ENCODE measurements at regions of chr22 and their contacts with region 1.

Region 1: DNA sequence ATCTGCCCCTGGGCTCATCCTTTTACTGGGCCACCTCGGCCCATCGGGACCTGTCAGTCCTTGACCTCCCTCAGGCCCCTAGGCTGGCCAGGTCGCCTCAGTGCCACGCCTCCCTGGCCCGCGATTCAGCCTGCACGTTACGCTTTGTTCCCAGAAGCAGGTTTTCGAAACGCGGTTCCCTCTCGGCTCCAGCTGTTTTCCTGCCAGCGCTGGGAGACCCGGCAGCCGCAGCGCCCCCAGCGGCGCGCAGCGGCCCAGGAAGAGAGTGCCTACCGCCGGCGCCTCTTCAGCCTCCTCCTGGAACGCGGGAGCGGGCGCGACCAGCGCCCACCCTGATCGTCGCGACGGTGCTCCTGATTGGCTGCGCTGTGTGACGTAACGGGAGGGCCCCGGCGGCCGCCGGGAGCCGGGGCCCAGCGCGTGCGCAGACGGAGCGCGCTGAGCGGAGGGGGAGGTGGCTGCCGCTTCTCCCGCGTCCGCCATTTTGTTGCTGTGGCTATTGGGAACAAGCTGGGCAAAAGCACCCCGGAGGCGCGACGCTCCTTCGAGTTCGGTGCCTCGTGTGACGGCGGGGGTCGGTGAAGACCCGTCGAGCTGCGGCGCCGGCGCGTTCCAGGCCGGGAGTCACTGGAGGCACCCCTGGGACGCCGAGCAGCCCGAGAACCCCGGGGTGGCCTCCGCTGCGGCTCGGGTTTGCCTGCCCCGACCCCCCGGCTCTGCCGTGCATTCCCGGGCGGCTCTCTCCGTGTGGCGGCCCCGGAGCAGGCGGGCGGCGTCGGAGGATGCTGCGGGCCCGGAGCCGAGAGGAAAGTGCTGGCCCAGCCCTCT is at the start of gene CRKL:
- DNase-seq: peak; percentile 98
- ATAC-seq: peak; percentile 98
- H3K4me3 Mint-ChIP-seq: peak within 1 kb of the TSS; percentile 99
- H3K27ac Mint-ChIP-seq: peak within 1 kb of the TSS; percentile 93
- H3K4me1 Mint-ChIP-seq: peaks cover 27% of the 10 kb centered on the region
- H3K27me3 Mint-ChIP-seq: no peaks in the 10 kb centered on the region
- total RNA-seq, gene CRKL: 80.8 to 92.0 TPM

Region 2: GRCh38 chr22:20792947-20793294 is 124.3 kb before region 1 on chr22:
- CTCF ChIA-PET with region 1: no interaction called
- POLR2A ChIA-PET with region 1: no interaction called
- intact Hi-C with region 1: no loop called
- DNase-seq: no peak
- ATAC-seq: no peak
- H3K4me3 Mint-ChIP-seq: no peak overlapping the region
- H3K27ac Mint-ChIP-seq: no peak overlapping the region
- H3K4me1 Mint-ChIP-seq: no peaks in the 10 kb centered on the region
- H3K27me3 Mint-ChIP-seq: no peaks in the 10 kb centered on the region

Region 3: GRCh38 chr22:20836987-20837823 is 80.0 kb before region 1 on chr22:
- CTCF ChIA-PET with region 1: no interaction called
- POLR2A ChIA-PET with region 1: no interaction called
- intact Hi-C with region 1: no loop called
- DNase-seq: no peak
- ATAC-seq: no peak
- H3K4me3 Mint-ChIP-seq: no peak overlapping the region
- H3K27ac Mint-ChIP-seq: no peak overlapping the region
- H3K4me1 Mint-ChIP-seq: peaks cover 27% of the 10 kb centered on the region
- H3K27me3 Mint-ChIP-seq: no peaks in the 10 kb centered on the region

Region 4: DNA sequence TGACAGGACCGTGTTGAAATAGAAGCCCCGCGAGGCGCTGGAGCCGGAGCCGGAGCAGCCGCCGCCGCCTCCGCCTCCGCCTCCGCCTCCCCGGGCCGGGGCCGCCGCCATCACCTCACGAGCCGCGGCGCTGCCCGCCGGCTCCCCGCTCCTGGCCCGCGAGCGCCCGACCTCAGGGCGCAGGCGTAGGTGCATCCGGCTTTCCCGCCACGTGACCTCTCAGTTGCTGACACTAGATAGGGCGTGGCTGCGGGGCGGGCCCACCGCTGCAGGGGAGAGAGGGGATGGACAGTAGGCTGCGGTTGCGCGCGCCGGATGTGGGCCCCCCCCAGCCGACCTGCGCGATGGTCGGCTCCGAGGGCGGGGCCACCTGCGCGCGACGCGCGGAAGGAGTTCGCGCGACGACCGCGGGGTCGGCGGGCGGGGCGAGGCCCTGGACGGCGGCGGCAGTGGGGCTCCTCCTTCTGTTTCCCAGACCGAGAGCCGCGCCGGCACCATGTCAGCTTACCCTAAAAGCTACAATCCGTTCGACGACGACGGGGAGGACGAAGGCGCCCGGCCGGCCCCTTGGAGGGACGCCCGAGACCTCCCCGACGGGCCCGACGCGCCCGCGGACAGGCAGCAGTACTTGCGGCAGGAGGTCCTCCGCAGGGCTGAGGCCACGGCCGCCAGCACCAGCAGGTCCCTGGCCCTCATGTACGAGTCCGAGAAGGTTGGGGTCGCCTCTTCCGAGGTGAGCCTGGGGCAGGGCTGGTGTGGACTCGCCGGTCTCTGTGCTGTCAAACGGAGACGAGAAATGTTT is 58.4 kb before region 1 on chr22 and contains the starts of genes PI4KA and SNAP29:
- CTCF ChIA-PET with region 1: interaction called, 3 read pairs
- POLR2A ChIA-PET with region 1: interaction called, 4 read pairs
- intact Hi-C with region 1: loop called (anchors 1 to 2 kb)
- DNase-seq: peak; percentile 99
- ATAC-seq: peak; percentile 95
- H3K4me3 Mint-ChIP-seq: peak within 1 kb of the TSS; percentile 87
- H3K27ac Mint-ChIP-seq: peak within 1 kb of the TSS; percentile 79
- H3K4me1 Mint-ChIP-seq: peaks cover 46% of the 10 kb centered on the region
- H3K27me3 Mint-ChIP-seq: no peaks in the 10 kb centered on the region
- total RNA-seq, gene PI4KA: 52.8 TPM
- total RNA-seq, gene SNAP29: 22.8 to 33.8 TPM

Region 5: DNA sequence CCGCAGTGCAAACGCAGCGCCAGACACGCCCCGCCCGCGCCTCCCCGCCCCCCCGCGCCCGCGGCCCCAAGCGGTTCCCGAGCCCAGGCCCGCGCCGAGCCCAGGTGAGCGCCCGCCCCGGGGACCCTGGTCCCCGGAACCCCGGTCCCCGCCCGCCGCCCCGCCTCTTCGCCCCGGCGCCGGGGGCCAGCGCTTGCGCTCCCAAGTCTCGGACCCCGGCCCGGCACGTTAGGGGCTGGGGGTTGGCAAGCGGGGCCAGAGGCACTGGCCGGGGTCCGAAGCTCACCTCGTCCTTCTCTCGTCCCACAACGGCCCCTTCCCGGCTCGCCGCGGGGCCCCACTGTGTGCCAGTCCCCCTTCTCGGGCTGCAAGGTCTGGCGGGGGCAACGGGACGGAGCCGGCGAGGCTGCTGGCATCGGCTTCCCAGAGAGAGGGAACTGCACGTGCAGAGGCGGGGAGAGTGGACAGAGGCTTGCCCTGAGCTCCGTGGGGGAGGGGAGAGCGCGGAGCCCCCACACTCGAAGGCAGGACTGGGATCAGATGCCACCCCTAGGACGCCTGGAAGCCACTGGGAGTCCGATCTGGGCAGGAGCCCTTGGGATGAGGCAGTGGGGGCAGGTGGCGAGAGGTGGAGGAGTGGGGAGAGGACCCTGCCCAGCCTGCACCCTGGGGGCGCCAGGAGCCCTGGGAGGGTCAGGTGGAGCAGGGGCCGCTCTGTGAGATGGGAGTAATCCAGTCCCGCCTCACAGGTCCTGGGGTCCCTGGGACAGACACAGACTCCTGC is 48.1 kb after region 1 on chr22:
- CTCF ChIA-PET with region 1: interaction called, 3 read pairs
- POLR2A ChIA-PET with region 1: no interaction called
- intact Hi-C with region 1: loop called in 1 of 2 experiments (anchors 5 kb)
- DNase-seq: no peak
- ATAC-seq: no peak
- H3K4me3 Mint-ChIP-seq: no peak overlapping the region
- H3K27ac Mint-ChIP-seq: no peak overlapping the region
- H3K4me1 Mint-ChIP-seq: peaks cover 11% of the 10 kb centered on the region
- H3K27me3 Mint-ChIP-seq: peaks cover 7% of the 10 kb centered on the region

Region 6: DNA sequence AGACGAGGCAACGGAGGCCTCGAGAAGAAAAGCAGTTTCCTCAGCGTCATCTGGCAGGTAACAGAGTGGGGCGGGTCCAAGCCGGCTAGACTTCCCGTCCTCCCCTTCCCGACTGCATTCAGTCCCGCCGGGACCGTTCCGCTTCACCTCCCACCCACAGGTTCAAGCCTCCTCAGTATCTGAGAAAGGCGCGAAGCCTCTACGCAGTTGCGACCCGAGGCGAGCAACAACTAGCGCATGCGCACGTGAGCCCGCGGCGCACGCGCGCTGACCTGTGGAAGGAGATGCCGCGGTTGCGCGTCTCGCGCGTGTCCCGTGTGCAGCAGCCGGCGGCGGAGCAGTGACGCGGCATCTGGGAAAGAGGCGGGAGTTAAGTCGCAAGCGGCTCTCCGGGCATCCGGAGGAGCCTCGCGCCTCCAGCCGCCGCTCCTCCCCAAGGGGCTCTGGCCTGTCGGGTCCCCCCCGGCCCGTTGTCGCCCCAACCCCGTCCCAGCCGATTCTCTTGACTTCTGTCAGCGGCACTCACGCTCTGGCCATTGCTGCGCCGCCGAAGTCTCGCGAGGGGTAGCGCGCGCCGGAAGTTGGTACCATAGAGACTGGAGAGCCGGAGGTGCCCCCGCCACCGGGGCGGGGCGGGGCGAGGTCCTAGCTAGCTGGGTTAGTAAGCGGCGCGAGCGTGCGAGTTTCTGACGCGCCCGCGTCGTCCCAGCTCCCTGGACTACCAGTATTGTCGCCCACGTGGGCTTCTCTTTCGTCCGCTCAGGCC is 84.5 kb after region 1 on chr22 and contains the start of gene THAP7:
- CTCF ChIA-PET with region 1: interaction called, 3 read pairs
- POLR2A ChIA-PET with region 1: interaction called, 5 read pairs
- intact Hi-C with region 1: loop called (anchors 1 to 5 kb)
- DNase-seq: peak; percentile 99
- ATAC-seq: peak; percentile 92
- H3K4me3 Mint-ChIP-seq: peak within 1 kb of the TSS; percentile 92
- H3K27ac Mint-ChIP-seq: peak within 1 kb of the TSS; percentile 96
- H3K4me1 Mint-ChIP-seq: peaks cover 19% of the 10 kb centered on the region
- H3K27me3 Mint-ChIP-seq: no peaks in the 10 kb centered on the region
- total RNA-seq, gene THAP7: 25.1 to 27.2 TPM

Region 7: DNA sequence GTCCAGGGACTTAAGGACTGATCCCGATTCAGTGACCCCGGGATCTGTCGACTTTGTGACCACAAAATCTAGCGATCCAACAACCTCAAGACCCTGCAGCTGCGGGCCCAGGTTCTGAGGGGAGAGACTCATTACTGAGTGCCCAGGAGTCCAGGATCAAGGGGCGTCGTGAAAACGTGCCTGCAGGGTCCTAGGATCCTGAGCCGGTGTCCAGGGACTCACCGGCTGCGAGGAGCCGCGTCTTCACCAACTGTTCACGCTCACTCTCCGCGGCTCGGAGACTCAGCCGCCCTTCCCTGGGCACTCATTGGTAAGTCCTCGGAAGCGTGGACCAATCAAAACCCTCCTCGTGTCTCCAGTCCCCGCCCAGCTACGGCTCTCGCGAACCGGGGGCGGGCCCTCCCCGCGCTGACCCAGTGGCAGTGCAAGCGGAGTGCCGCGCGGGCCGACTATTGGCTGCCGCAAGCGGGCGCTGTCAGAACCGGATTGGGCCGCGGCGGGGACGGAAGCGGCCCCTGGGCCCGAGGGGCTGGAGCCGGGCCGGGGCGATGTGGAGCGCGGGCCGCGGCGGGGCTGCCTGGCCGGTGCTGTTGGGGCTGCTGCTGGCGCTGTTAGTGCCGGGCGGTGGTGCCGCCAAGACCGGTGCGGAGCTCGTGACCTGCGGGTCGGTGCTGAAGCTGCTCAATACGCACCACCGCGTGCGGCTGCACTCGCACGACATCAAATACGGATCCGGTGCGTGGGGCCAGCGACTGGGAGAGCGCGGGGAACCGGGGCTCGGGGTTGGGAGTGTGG is 724.8 kb after region 1 on chr22 and contains the start of gene SDF2L1:
- CTCF ChIA-PET with region 1: no interaction called
- POLR2A ChIA-PET with region 1: no interaction called
- intact Hi-C with region 1: loop called in 1 of 2 experiments (anchors 2 kb)
- DNase-seq: peak; percentile 99
- ATAC-seq: peak; percentile 99
- H3K4me3 Mint-ChIP-seq: peak within 1 kb of the TSS; percentile 85
- H3K27ac Mint-ChIP-seq: peak within 1 kb of the TSS; percentile 80
- H3K4me1 Mint-ChIP-seq: peaks cover 30% of the 10 kb centered on the region
- H3K27me3 Mint-ChIP-seq: peaks cover 2% of the 10 kb centered on the region
- total RNA-seq, gene SDF2L1: 13.7 to 32.8 TPM

Measured in activated CD4-positive, alpha-beta T cell treated with anti-CD3 and anti-CD28 coated beads for 36 hours (primary cell).